ENCODE measurements at regions of chr17 and their contacts with region 1.

Region 1: GRCh38 chr17:8997994-8998628 is 23.2 kb upstream of the NTN1 start:
- DNase-seq: peak; percentile 51
- ATAC-seq: peak; percentile 88
- H3K4me3 ChIP-seq: no peak overlapping the region
- H3K27ac ChIP-seq: no peak overlapping the region
- H3K4me1 ChIP-seq: peaks cover 0 to 4% of the 10 kb centered on the region in 2 experiments; a peak in 1 of 4 replicates
- H3K27me3 ChIP-seq: no peaks in the 10 kb centered on the region
- CTCF ChIP-seq: peak; percentile 98
- POLR2A ChIP-seq: no peak
- RAD21 ChIP-seq: peak; percentile 82

Region 2: DNA sequence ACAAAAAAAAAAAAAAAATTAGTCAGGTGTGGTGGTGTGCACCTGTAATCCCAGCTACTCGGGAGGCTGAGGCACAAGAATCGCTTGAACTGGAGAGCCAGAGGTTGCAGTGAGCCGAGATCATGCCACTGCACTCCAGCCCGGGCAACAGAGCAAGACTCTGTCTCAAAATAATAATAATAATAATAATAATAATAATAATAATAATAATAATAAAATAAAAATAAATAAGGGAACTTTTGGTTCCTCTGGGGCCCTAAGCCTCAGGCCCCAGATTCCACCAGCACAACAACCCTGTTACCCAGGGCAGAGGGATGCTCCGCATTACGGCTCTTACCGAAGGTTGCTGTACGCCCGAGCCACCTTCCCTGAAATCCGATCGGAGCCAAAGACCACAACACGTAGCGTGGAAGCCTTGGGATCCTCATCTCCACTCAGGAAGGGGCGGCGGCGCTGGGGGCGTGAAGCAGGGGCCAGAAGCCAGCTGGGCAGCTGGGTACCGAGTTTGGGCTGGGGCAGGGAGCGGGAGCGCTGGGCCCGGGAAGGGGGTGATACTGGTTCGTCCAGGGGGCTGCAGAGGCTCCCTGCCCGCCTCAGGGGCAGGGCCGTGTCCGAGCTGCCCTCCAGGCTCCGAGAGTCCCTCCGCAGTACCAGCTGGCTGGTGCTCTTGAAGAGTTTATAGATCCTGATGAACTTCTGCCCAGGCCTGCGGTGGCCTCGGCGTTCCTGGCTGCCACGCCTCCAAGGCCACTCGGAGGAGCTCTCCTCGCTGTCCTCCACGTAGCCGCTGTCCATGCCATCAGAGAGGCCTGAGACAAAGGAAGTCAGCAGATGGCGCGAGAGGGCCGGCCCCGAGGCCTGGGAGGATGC is 110.0 kb before region 1 on chr17:
- CTCF ChIA-PET with region 1: interaction called, 9 read pairs
- POLR2A ChIA-PET with region 1: no interaction called
- RAD21 ChIA-PET with region 1: no interaction called
- intact Hi-C with region 1: loop called (anchors 1 kb)
- DNase-seq: no peak
- ATAC-seq: no peak
- H3K4me3 ChIP-seq: no peak overlapping the region
- H3K27ac ChIP-seq: no peak overlapping the region
- H3K4me1 ChIP-seq: peaks cover 0 to 20% of the 10 kb centered on the region in 2 experiments; a peak in 2 of 4 replicates
- H3K27me3 ChIP-seq: no peaks in the 10 kb centered on the region
- CTCF ChIP-seq: peak; percentile 22 to 38 (median 33); a peak in 4 of 6 replicates
- POLR2A ChIP-seq: no peak
- RAD21 ChIP-seq: no peak

Region 3: GRCh38 chr17:8894673-8895578 is 103.2 kb before region 1 on chr17:
- CTCF ChIA-PET with region 1: interaction called, 11 read pairs
- POLR2A ChIA-PET with region 1: no interaction called
- RAD21 ChIA-PET with region 1: no interaction called
- intact Hi-C with region 1: no loop called
- DNase-seq: peak; percentile 39
- ATAC-seq: peak; percentile 93
- H3K4me3 ChIP-seq: no peak overlapping the region
- H3K27ac ChIP-seq: no peak overlapping the region
- H3K4me1 ChIP-seq: peaks cover 0 to 5% of the 10 kb centered on the region in 2 experiments; a peak in 1 of 4 replicates
- H3K27me3 ChIP-seq: no peaks in the 10 kb centered on the region
- CTCF ChIP-seq: peak; percentile 57 to 80 (median 77); a peak in 5 of 6 replicates
- POLR2A ChIP-seq: no peak
- RAD21 ChIP-seq: peak; percentile 80

Region 4: DNA sequence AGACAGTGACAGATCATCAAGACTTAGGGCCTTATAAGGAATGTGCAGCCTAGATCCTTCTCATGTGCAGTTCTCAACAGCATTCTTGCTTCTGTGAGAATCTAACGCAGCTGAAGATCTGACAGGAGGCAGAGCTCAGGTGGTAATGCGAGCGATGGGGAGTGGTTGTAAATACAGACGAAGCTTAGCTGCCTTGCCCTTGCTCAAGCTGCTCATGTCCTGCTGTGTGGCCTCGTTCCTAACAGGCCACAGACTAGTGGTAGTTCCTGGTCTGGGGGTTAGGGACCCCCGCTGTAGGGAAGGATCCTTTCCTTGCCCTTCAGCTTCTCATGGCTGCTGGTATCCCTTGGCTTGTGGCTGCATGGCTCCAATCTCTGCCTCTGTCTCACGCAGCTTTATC is 12.9 kb after region 1 on chr17:
- CTCF ChIA-PET with region 1: interaction called, 11 read pairs
- POLR2A ChIA-PET with region 1: no interaction called
- RAD21 ChIA-PET with region 1: no interaction called
- intact Hi-C with region 1: no loop called
- DNase-seq: no peak
- ATAC-seq: no peak
- H3K4me3 ChIP-seq: no peak overlapping the region
- H3K27ac ChIP-seq: no peak overlapping the region
- H3K4me1 ChIP-seq: no peaks in the 10 kb centered on the region
- H3K27me3 ChIP-seq: peaks cover 11% of the 10 kb centered on the region; the same call in 1 of the 2 replicates
- CTCF ChIP-seq: no peak
- POLR2A ChIP-seq: no peak
- RAD21 ChIP-seq: no peak

Region 5: GRCh38 chr17:9291912-9292560 is 293.9 kb after region 1 on chr17:
- CTCF ChIA-PET with region 1: interaction called, 10 read pairs
- POLR2A ChIA-PET with region 1: no interaction called
- RAD21 ChIA-PET with region 1: no interaction called
- intact Hi-C with region 1: loop called (anchors 5 kb)
- DNase-seq: no peak
- ATAC-seq: peak; percentile 95
- H3K4me3 ChIP-seq: no peak overlapping the region
- H3K27ac ChIP-seq: no peak overlapping the region
- H3K4me1 ChIP-seq: peaks cover 0 to 8% of the 10 kb centered on the region in 2 experiments; a peak in 1 of 4 replicates
- H3K27me3 ChIP-seq: no peaks in the 10 kb centered on the region
- CTCF ChIP-seq: peak; percentile 34 to 75 (median 74); a peak in 5 of 6 replicates
- POLR2A ChIP-seq: no peak
- RAD21 ChIP-seq: peak; percentile 68